CD8-positive, alpha-beta T cell (primary cell): ENCODE measurements at regions of chr3 and their contacts with region 1.

Region 1: DNA sequence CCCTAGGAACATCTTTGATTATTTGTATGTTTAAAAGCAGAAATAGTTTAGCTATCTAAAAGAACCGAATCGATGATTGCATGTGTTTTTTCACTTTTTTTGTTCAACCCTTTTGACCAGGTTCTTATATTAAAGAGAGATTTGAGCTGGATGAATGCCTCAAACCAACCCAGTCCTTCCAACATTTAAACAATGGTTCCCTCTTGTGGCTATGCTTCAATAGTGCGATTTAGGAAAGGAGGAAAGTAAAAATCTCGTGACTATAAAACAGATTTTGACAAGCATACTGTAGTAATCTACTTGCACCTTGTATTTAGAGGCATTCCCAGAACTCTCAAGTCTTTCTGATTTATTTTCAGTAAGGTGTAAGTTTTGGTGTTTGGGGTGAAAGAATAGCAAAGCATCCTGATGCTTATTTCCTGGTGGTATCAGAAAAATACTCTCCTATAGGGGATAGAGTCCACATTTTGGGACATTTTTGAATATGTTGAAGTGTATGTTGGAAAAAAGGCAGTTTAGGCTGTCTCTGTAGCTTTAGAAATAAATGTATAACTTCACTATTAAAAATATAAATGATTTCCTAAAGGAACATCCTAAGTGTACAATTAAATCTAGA is 159.6 kb upstream of the KCNH8 start:
- DNase-seq: peak in 2 of 9 experiments; percentile 40 to 61
- ATAC-seq: peak; percentile 61
- H3K4me3 ChIP-seq: no peak overlapping the region
- H3K4me3 Mint-ChIP-seq: peak overlapping the region; percentile 7
- H3K27ac ChIP-seq: no peak overlapping the region
- H3K27ac Mint-ChIP-seq: no peak overlapping the region
- H3K4me1 ChIP-seq: peaks cover 3% of the 10 kb centered on the region
- H3K4me1 Mint-ChIP-seq: peaks cover 14% of the 10 kb centered on the region
- H3K27me3 ChIP-seq: peaks cover 0 to 3% of the 10 kb centered on the region in 2 experiments
- H3K27me3 Mint-ChIP-seq: peaks cover 9% of the 10 kb centered on the region
- CTCF ChIP-seq: peak; percentile 91

Region 2: GRCh38 chr3:17431004-17431403 is 1557.7 kb before region 1 on chr3:
- CTCF ChIA-PET with region 1: interaction called, 3 read pairs
- POLR2A ChIA-PET with region 1: no interaction called
- intact Hi-C with region 1: loop called (anchors 2 to 5 kb)
- DNase-seq: peak in 1 of 9 experiments; percentile 14
- ATAC-seq: no peak
- H3K4me3 ChIP-seq: no peak overlapping the region
- H3K4me3 Mint-ChIP-seq: no peak overlapping the region
- H3K27ac ChIP-seq: no peak overlapping the region
- H3K27ac Mint-ChIP-seq: no peak overlapping the region
- H3K4me1 ChIP-seq: no peaks in the 10 kb centered on the region
- H3K4me1 Mint-ChIP-seq: no peaks in the 10 kb centered on the region
- H3K27me3 ChIP-seq: no peaks in the 10 kb centered on the region
- H3K27me3 Mint-ChIP-seq: no peaks in the 10 kb centered on the region
- CTCF ChIP-seq: peak; percentile 30

Region 3: GRCh38 chr3:17841190-17841828 is 1147.4 kb before region 1 on chr3:
- CTCF ChIA-PET with region 1: interaction called, 20 read pairs
- POLR2A ChIA-PET with region 1: no interaction called
- intact Hi-C with region 1: loop called (anchors 1 to 5 kb)
- DNase-seq: peak; percentile 46 to 83 (median 71)
- ATAC-seq: peak; percentile 80
- H3K4me3 ChIP-seq: no peak overlapping the region
- H3K4me3 Mint-ChIP-seq: no peak overlapping the region
- H3K27ac ChIP-seq: no peak overlapping the region
- H3K27ac Mint-ChIP-seq: no peak overlapping the region
- H3K4me1 ChIP-seq: no peaks in the 10 kb centered on the region
- H3K4me1 Mint-ChIP-seq: no peaks in the 10 kb centered on the region
- H3K27me3 ChIP-seq: no peaks in the 10 kb centered on the region
- H3K27me3 Mint-ChIP-seq: no peaks in the 10 kb centered on the region
- CTCF ChIP-seq: peak; percentile 87

Region 4: DNA sequence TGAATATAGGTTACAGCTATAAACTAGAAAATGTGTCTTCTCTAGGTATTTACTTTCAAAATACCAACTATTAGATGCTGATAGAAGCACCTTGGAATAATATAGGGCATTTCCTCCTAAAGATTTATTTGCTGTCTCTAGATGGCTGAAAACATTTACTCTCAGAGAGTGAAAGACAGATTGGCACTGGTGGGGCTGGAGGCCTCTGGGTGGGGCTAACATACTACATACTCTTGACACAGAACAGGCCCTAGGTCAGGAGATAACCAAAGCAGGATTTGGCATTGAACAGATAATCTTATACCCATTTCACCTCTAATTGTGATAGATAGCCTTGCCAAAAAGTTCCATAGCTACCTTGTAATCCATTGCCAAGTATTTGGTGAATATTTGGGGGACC is 993.0 kb before region 1 on chr3:
- CTCF ChIA-PET with region 1: no interaction called
- POLR2A ChIA-PET with region 1: no interaction called
- intact Hi-C with region 1: loop called in 1 of 2 experiments (anchors 1 kb)
- DNase-seq: no peak
- ATAC-seq: no peak
- H3K4me3 ChIP-seq: no peak overlapping the region
- H3K4me3 Mint-ChIP-seq: no peak overlapping the region
- H3K27ac ChIP-seq: no peak overlapping the region
- H3K27ac Mint-ChIP-seq: no peak overlapping the region
- H3K4me1 ChIP-seq: no peaks in the 10 kb centered on the region
- H3K4me1 Mint-ChIP-seq: no peaks in the 10 kb centered on the region
- H3K27me3 ChIP-seq: no peaks in the 10 kb centered on the region
- H3K27me3 Mint-ChIP-seq: peaks cover 2% of the 10 kb centered on the region
- CTCF ChIP-seq: no peak

Region 5: GRCh38 chr3:18444595-18445400 is 543.9 kb before region 1 on chr3:
- CTCF ChIA-PET with region 1: interaction called, 6 read pairs
- POLR2A ChIA-PET with region 1: interaction called, 3 read pairs
- intact Hi-C with region 1: loop called in 1 of 2 experiments (anchors 10 kb)
- DNase-seq: peak; percentile 53 to 91 (median 78)
- ATAC-seq: peak; percentile 61
- H3K4me3 ChIP-seq: peak overlapping the region; percentile 81 to 91
- H3K4me3 Mint-ChIP-seq: peak overlapping the region; percentile 92
- H3K27ac ChIP-seq: peak overlapping the region; percentile 76 to 90
- H3K27ac Mint-ChIP-seq: peak overlapping the region; percentile 97
- H3K4me1 ChIP-seq: peaks cover 4% of the 10 kb centered on the region
- H3K4me1 Mint-ChIP-seq: peaks cover 48% of the 10 kb centered on the region
- H3K27me3 ChIP-seq: no peaks in the 10 kb centered on the region
- H3K27me3 Mint-ChIP-seq: no peaks in the 10 kb centered on the region
- CTCF ChIP-seq: no peak

Region 6: GRCh38 chr3:18847583-18848197 is 141.0 kb before region 1 on chr3:
- CTCF ChIA-PET with region 1: interaction called, 4 read pairs
- POLR2A ChIA-PET with region 1: no interaction called
- intact Hi-C with region 1: loop called in 1 of 2 experiments (anchors 5 kb)
- DNase-seq: peak in 2 of 9 experiments; percentile 13 to 25
- ATAC-seq: no peak
- H3K4me3 ChIP-seq: no peak overlapping the region
- H3K4me3 Mint-ChIP-seq: no peak overlapping the region
- H3K27ac ChIP-seq: no peak overlapping the region
- H3K27ac Mint-ChIP-seq: no peak overlapping the region
- H3K4me1 ChIP-seq: no peaks in the 10 kb centered on the region
- H3K4me1 Mint-ChIP-seq: peaks cover 9% of the 10 kb centered on the region
- H3K27me3 ChIP-seq: no peaks in the 10 kb centered on the region
- H3K27me3 Mint-ChIP-seq: peaks cover 3% of the 10 kb centered on the region
- CTCF ChIP-seq: peak; percentile 45